Aorta (tissue), 5 donors: ENCODE measurements at regions of chr5 and their contacts with region 1.

Region 1: DNA sequence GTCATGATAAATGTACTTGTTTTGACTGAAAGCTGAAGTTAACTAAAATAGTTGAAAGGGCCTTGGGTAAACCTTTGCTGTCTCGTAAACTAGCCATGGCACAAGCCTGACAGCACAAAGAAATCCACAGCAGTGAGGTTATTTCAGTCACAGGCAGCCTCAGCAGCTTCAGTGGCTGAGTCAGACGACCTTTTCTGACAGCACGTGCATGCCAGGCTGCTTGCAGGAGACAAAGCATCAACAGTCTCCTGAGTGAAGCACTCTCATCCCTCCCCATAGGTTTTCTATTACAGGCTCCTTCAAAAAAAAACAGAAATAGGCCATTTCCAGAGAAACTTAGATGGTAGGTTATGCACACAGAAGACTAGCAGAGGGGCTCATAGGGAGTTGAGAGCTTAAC is 34.6 kb downstream of the OXCT1 start:
- DNase-seq: peak; percentile 72 to 75
- ATAC-seq: peak; percentile 84
- H3K4me3 ChIP-seq: no peak overlapping the region
- H3K27ac ChIP-seq: peak overlapping the region in 1 of 2 donors; percentile 92
- H3K4me1 ChIP-seq: peaks cover 2 to 6% of the 10 kb centered on the region in 2 donors
- H3K27me3 ChIP-seq: no peaks in the 10 kb centered on the region

Region 2: DNA sequence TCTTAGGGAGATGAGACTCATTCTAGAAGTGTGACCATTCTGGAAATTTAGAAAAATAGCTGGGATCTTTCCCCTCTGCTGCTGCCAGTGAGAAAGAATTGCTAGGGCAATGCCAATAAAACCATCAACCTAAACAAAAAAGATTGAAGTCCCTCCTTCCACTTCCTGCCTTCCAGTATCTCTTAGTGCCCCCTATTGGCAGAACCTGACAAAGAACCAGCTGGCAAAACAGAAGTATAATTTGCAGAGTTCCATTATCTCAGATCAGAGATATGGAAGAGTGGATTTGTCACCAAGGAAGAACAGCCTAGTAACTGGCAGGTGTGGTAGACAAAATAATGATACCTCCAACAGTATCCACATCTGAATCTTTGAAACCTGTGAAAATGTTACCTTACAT is 311.5 kb before region 1 on chr5:
- intact Hi-C with region 1: loop called in 1 of 2 experiments (anchors 10 kb)
- DNase-seq: no peak
- ATAC-seq: no peak
- H3K4me3 ChIP-seq: no peak overlapping the region
- H3K27ac ChIP-seq: no peak overlapping the region
- H3K4me1 ChIP-seq: peaks cover 0 to 2% of the 10 kb centered on the region in 2 donors
- H3K27me3 ChIP-seq: no peaks in the 10 kb centered on the region

Region 3: DNA sequence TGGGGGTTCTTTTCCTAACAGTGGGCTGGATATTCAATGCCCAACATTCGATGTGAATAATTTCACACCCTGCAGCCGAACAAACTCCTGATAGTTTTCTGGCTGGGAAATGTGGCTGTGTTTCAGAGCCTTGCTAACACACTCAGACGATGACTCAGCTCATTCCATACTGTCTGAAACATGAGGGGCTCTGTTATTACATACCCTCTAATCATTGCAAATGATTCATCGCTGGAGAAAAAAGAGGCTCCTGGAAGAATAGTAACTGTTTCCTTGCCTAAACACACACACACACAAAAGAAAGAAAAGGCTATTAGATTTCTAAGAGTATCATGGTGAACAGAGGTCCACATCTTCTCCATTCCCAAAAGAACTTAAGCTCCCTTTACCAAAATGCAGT is 41.2 kb before region 1 on chr5:
- intact Hi-C with region 1: loop called in 1 of 2 experiments (anchors 5 kb)
- DNase-seq: no peak
- ATAC-seq: peak; percentile 76
- H3K4me3 ChIP-seq: no peak overlapping the region
- H3K27ac ChIP-seq: peak overlapping the region; percentile 50 to 93
- H3K4me1 ChIP-seq: peaks cover 0 to 9% of the 10 kb centered on the region in 2 donors
- H3K27me3 ChIP-seq: no peaks in the 10 kb centered on the region

Region 4: DNA sequence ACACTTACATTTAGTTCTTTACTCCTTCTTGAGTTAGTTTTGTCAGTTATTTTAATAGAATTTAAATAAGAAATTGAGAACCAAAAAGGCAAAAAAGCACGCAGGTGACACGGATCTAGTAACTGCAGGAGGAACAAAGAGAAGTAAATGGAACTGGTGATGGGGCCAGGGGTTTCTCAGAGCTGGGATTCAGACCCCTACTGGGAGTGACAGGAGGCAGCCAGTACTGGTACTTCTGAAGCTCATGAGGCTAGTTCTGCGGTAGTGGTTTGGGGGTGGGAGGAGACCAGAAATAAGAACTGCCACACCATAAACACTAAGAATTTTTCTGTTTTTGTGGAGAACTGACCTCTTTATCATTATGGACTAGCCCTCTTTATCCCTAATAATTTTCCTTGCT is 13.6 kb before region 1 on chr5:
- intact Hi-C with region 1: loop called in 1 of 2 experiments (anchors 1 kb)
- DNase-seq: no peak
- ATAC-seq: no peak
- H3K4me3 ChIP-seq: no peak overlapping the region
- H3K27ac ChIP-seq: no peak overlapping the region
- H3K4me1 ChIP-seq: no peaks in the 10 kb centered on the region
- H3K27me3 ChIP-seq: no peaks in the 10 kb centered on the region

Region 5: GRCh38 chr5:41985945-41986344 is 150.3 kb after region 1 on chr5:
- intact Hi-C with region 1: no loop called
- DNase-seq: no peak
- ATAC-seq: no peak
- H3K4me3 ChIP-seq: no peak overlapping the region
- H3K27ac ChIP-seq: peak overlapping the region in 1 of 2 donors; percentile 43
- H3K4me1 ChIP-seq: peaks cover 0 to 2% of the 10 kb centered on the region in 2 donors
- H3K27me3 ChIP-seq: no peaks in the 10 kb centered on the region